Activated CD8-positive, alpha-beta T cell treated with anti-CD3 and anti-CD28 coated beads, Interleukin-2, amount 10 ng/mL, durations not matched to agents 7 days and 5 days (primary cell): ENCODE measurements at regions of chr1 and their contacts with region 1.

Region 1: DNA sequence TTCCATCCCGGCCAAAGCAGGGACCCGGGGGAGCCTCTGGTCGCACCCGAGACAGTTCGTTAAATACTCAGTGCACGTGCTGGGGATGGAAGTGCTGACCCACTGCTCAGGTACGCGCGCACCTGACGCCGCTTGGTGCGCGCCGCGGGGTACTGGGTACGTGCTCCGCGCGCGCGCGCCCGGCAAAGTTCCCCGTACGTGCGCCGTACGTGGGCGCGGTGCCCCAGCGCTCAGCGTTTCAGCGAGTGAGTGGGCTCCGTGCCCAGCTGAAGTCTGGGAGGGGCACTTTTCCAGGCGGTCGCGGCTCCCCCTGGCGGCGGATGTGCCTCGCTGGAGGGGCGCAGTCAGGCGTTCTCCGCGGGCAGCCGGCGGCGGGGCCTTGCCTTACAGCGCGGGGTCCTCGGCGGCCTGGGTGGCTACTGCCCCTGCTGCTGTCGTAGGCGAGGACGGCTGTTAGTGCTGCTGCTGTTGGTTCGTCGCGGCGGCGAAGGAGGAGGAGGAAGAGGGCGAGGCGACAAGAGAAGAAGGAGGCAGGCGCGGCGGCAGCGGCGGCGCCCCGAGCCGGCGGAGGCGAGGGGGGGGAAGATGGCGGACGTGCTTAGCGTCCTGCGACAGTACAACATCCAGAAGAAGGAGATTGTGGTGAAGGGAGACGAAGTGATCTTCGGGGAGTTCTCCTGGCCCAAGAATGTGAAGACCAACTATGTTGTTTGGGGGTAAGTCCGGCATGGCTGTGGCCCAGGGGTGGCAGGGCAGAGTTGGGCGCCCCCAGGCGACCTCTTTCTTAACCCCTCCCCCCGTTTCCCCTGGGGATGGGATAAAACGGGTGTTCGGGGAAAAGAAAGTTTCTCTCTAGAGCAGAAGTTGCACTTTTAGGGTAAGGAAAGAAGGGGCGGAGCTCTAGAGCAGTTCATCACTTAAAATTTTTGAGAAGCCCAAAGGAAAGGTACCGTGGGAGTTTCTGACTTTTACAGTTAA is at the start of gene CDC73:
- DNase-seq: peak; percentile 97
- ATAC-seq: peak; percentile 98
- H3K4me3 Mint-ChIP-seq: peak within 1 kb of the TSS; percentile 99
- H3K27ac Mint-ChIP-seq: peak within 1 kb of the TSS; percentile 94
- H3K4me1 Mint-ChIP-seq: peaks cover 45% of the 10 kb centered on the region
- H3K27me3 Mint-ChIP-seq: peaks cover 14% of the 10 kb centered on the region
- total RNA-seq, gene CDC73: 51.8 to 53.8 TPM

Region 2: GRCh38 chr1:193104906-193105820 is 16.7 kb before region 1 on chr1 and contains the start of gene GLRX2:
- CTCF ChIA-PET with region 1: interaction called, 14 read pairs
- POLR2A ChIA-PET with region 1: interaction called, 6 read pairs
- DNase-seq: peak; percentile 70
- ATAC-seq: peak; percentile 94
- H3K4me3 Mint-ChIP-seq: peak within 1 kb of the TSS; percentile 94
- H3K27ac Mint-ChIP-seq: peak within 1 kb of the TSS; percentile 78
- H3K4me1 Mint-ChIP-seq: peaks cover 18% of the 10 kb centered on the region
- H3K27me3 Mint-ChIP-seq: peaks cover 12% of the 10 kb centered on the region
- total RNA-seq, gene GLRX2: 18.7 to 21.8 TPM

Region 3: DNA sequence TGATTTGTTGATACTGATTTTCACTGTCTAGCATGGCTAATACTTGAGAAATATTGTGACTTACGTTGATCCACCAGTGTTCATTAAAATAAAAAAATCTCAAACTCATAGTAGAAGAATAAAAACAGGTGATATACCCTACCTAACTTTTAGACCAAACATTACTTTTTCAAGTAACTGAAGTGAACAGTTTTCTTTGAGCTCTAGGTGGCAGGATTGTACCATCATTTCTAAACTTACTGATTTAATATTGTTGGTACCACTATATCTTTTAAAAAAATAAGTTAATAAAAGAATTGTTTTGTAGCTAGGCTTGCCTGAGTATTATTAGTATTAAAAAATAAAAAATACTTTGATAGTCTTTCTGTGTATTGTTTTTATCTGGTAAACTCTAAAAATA is 21.4 kb after region 1 on chr1:
- CTCF ChIA-PET with region 1: interaction called, 10 read pairs
- POLR2A ChIA-PET with region 1: no interaction called
- DNase-seq: no peak
- ATAC-seq: no peak
- H3K4me3 Mint-ChIP-seq: no peak overlapping the region
- H3K27ac Mint-ChIP-seq: no peak overlapping the region
- H3K4me1 Mint-ChIP-seq: peaks cover 9% of the 10 kb centered on the region
- H3K27me3 Mint-ChIP-seq: no peaks in the 10 kb centered on the region